ENCODE measurements at regions of chr10 and their contacts with region 1.

Region 1: DNA sequence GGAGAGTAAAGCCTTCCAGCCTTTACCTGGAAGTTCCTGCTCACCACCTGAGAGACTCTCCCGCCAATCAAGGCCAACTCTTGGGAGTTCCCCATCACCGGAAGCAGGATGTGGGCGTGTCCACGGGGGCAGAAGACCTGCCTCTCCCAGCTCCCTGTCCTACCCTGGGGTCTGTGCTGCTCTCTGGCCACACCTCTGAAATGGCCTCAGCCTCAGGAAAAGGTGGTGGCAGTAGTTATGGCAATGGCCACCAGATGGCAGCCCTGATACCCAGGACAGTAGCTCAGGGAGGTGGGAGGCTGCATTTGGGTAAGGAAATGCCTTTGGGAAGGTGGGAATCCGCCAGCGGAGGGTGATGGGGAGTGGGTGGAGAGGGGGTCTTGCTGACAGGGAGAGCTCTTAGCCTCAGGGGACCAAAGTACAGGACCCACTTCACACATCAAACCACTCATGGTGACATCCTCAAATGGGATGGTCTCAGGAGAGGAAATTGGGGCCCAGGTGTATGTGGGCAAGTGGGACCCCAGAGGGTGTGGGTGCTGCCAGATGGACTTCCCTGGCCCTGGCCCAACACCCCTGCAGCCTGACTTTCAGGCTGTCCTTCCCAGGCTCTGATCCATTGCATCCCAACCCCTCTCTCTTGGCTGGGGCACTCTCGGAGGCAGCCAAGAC is 33.9 kb downstream of the KAZALD1 start:
- H3K4me3 ChIP-seq: no peak overlapping the region
- H3K27ac ChIP-seq: no peak overlapping the region
- H3K4me1 ChIP-seq: no peaks in the 10 kb centered on the region
- CTCF ChIP-seq: peak; percentile 91

Region 2: DNA sequence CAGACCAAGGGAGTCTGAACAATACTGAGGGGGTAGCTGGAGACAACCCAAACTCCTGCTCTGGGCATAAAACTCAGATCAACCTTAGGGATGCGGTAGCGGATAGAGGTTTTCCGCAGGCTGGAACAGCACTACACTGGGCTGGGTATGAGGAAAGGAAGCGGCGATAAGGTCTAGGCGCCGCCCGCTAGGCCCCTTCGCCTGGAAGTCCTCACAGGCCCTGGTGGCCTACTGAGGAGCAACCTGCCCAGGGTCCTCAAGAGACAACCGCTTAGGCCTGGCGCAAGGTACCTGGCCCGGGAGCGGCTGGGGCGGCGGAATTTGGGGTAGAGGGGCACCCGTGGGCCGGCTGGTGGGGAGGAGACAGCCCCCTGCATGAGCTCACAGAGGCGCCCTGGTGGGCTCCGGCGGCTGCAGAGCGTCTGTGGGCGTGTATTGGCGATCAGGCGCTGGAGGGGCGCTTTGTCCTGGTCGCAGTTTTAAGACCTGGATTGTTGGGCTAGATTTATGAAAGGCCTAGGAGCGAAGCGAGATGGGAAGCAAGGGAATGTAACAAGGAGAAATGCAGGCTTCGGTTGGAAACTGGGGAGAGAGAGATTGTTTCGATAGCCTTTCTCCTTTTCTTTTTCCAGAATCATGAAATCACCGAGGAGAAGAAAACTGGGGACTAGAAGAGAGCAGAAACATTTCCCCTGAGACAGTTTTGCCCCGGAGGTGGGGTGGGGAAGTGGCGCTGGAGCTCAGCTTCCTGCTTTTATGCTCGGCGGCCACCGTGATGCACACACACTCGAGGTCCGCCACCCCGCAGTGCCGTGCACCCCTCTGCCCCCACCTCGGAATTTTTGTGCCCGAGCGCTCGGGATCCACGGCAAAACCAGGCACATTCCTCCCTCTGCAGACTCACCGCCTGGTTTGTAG is 1565.3 kb before region 1 on chr10:
- CTCF ChIA-PET with region 1: no interaction called
- POLR2A ChIA-PET with region 1: no interaction called
- H3K4me3 ChIP-seq: no peak overlapping the region
- H3K27ac ChIP-seq: 0 out of 2 replicates have a peak overlapping the region, but pooled peaks have one; percentile 7
- H3K4me1 ChIP-seq: peaks cover 11% of the 10 kb centered on the region
- CTCF ChIP-seq: no peak

Region 3: GRCh38 chr10:101018600-101019439 is 76.9 kb before region 1 on chr10:
- CTCF ChIA-PET with region 1: interaction called, 11 read pairs
- POLR2A ChIA-PET with region 1: interaction called, 3 read pairs
- H3K4me3 ChIP-seq: no peak overlapping the region
- H3K27ac ChIP-seq: no peak overlapping the region
- H3K4me1 ChIP-seq: no peaks in the 10 kb centered on the region; the same call in 1 of the 2 replicates
- CTCF ChIP-seq: peak; percentile 95

Region 4: GRCh38 chr10:101050208-101051069 is 45.2 kb before region 1 on chr10:
- CTCF ChIA-PET with region 1: interaction called, 31 read pairs
- POLR2A ChIA-PET with region 1: no interaction called
- H3K4me3 ChIP-seq: no peak overlapping the region; the same call in 1 of the 2 replicates
- H3K27ac ChIP-seq: no peak overlapping the region
- H3K4me1 ChIP-seq: peaks cover 8% of the 10 kb centered on the region
- CTCF ChIP-seq: peak; percentile 94

Region 5: GRCh38 chr10:101067356-101068083 is 28.2 kb before region 1 on chr10:
- CTCF ChIA-PET with region 1: interaction called, 10 read pairs
- POLR2A ChIA-PET with region 1: no interaction called
- H3K4me3 ChIP-seq: peak overlapping the region; percentile 49
- H3K27ac ChIP-seq: peak overlapping the region; percentile 66
- H3K4me1 ChIP-seq: peaks cover 15% of the 10 kb centered on the region
- CTCF ChIP-seq: peak; percentile 91

Region 6: GRCh38 chr10:101080933-101081931 is 14.4 kb before region 1 on chr10:
- CTCF ChIA-PET with region 1: interaction called, 37 read pairs
- POLR2A ChIA-PET with region 1: no interaction called
- H3K4me3 ChIP-seq: no peak overlapping the region
- H3K27ac ChIP-seq: no peak overlapping the region
- H3K4me1 ChIP-seq: no peaks in the 10 kb centered on the region
- CTCF ChIP-seq: no peak

Region 7: GRCh38 chr10:101120884-101121653 is 25.4 kb after region 1 on chr10:
- CTCF ChIA-PET with region 1: interaction called, 13 read pairs
- POLR2A ChIA-PET with region 1: no interaction called
- H3K4me3 ChIP-seq: no peak overlapping the region
- H3K27ac ChIP-seq: no peak overlapping the region
- H3K4me1 ChIP-seq: no peaks in the 10 kb centered on the region
- CTCF ChIP-seq: no peak

Measured in HEK293 (cell line).